ENCODE measurements at regions of chr6 and their contacts with region 1.

Region 1: DNA sequence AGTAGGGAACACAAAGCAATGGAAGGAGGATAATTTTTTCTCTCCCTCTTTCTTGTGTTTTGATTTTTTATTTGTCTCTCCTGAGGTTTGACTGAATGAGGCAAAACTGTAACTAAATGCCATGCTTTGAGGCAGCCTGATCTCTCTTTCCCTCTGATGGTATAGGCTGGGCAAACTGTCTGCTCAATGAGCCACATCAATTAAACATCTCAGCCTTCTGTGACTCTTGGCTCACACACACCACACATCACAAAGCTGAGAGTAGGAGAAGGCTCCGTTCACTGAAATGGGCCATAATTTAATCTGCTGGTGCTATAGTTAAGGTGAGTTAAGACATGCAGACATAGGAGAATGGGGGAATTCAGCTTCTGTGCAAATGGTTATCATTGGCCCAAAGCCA is 28.1 kb upstream of the SCGN start:
- DNase-seq: no peak
- H3K4me3 ChIP-seq: no peak overlapping the region
- H3K27ac ChIP-seq: no peak overlapping the region
- H3K4me1 ChIP-seq: no peaks in the 10 kb centered on the region
- H3K27me3 ChIP-seq: no peaks in the 10 kb centered on the region
- CTCF ChIP-seq: no peak

Region 2: GRCh38 chr6:25652007-25652515 is 28.2 kb after region 1 on chr6 and contains the start of gene SCGN:
- CTCF ChIA-PET with region 1: no interaction called
- dilution Hi-C with region 1: no loop called
- in situ Hi-C with region 1: no loop called
- intact Hi-C with region 1: no loop called
- DNase-seq: peak; percentile 67
- H3K4me3 ChIP-seq: peak within 1 kb of the TSS in 2 of 3 experiments; percentile 12 to 28
- H3K27ac ChIP-seq: no peak within 1 kb of the TSS
- H3K4me1 ChIP-seq: no peaks in the 10 kb centered on the region
- H3K27me3 ChIP-seq: peaks cover 5% of the 10 kb centered on the region
- CTCF ChIP-seq: no peak
- total RNA-seq, gene SCGN: not detected

Region 3: GRCh38 chr6:25670793-25671513 is 47.1 kb after region 1 on chr6:
- CTCF ChIA-PET with region 1: no interaction called
- dilution Hi-C with region 1: loop called (anchors 5 kb)
- in situ Hi-C with region 1: no loop called
- intact Hi-C with region 1: no loop called
- DNase-seq: peak; percentile 54
- H3K4me3 ChIP-seq: no peak overlapping the region
- H3K27ac ChIP-seq: no peak overlapping the region
- H3K4me1 ChIP-seq: peaks cover 3% of the 10 kb centered on the region
- H3K27me3 ChIP-seq: no peaks in the 10 kb centered on the region
- CTCF ChIP-seq: peak in 1 of 2 donors; percentile 29